ENCODE measurements at regions of chr1 and their contacts with region 1.

Region 1: GRCh38 chr1:59076612-59077011 is 220.3 kb upstream of the FGGY start:
- DNase-seq: no peak
- H3K4me3 ChIP-seq: no peak overlapping the region
- CTCF ChIP-seq: peak; percentile 5

Region 2: GRCh38 chr1:59061876-59062275 is 14.7 kb before region 1 on chr1:
- CTCF ChIA-PET with region 1: interaction called, 11 read pairs
- POLR2A ChIA-PET with region 1: no interaction called
- DNase-seq: peak; percentile 64
- H3K4me3 ChIP-seq: peak overlapping the region; percentile 27
- CTCF ChIP-seq: no peak

Measured in AG04449 (cell line).